Endothelial cell of umbilical vein (primary cell): ENCODE measurements at regions of chr7 and their contacts with region 1.

Region 1: DNA sequence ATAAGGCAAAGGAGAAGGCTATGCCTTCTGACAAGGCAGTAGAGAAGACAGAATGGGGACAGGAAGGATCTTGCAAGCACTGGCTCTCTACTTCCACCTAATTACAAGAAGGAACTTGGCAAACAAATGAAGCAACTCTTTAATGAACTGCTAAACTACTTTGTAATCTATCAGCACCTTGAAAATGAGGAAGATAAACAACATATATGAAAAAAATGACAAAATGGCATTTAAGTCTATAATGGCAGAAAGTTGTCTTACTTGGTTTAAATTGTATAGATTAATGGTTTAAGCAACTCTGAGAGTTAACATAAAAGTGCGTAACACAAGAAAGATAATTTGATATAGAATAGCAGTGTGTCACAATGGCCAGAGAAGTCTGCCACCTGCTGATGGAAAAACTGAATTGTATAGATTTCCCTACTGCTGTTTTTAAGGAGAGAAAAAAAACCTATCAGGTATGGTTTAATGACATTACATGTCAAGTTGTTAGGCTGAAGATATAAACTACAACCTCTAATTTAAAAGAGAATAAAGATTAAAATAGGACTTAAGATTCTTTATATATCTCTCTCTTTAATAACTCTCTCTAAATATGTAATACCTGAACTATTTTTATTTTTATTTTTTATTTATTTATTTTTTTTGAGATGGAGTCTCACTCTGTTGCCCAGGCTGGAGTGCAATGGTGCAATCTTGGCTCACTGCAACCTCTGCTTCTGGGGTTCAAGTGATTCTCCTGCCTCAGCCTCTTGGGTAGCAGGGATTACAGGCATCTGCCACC is 11.8 kb downstream of the NT5C3A start:
- DNase-seq: peak; percentile 84
- H3K4me3 ChIP-seq: no peak overlapping the region
- H3K27ac ChIP-seq: no peak overlapping the region
- H3K4me1 ChIP-seq: peaks cover 11% of the 10 kb centered on the region
- H3K27me3 ChIP-seq: no peaks in the 10 kb centered on the region
- CTCF ChIP-seq: peak; percentile 41 to 52
- POLR2A ChIP-seq: no peak

Region 2: DNA sequence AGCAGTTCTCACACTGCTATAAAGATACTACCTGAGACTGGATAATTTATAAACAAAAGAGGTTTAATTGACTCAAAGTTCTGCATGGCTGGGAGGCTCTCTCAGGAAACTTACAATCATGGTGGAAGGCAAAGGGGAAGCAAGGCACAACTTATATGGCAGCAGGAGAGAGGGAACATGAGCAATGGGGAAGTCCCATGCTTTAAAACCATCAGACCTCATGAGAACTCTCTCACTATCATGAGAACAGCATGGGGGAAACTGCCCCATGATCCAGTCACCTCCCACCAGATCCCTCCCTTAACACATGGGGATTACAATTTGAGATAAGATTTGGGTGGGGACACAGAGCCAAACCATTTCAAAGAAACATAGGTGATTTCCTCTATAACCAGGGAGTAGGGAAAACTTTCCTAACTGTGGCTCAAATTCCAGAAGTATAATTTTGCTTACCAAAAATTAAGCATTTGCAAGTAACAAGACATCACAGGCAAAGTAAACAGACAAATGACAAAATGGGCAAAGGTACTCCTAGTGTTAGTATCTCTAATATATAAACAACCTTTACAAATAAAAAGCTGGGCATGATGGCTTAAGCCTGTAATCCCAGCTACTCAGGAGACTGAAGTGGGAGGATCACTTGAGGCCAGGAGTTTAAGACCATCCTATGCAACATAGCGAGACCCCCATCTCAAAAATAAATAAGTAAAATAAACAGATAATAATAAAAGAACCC is 247.2 kb before region 1 on chr7:
- CTCF ChIA-PET with region 1: interaction called, 11 read pairs
- POLR2A ChIA-PET with region 1: no interaction called
- dilution Hi-C with region 1: no loop called
- intact Hi-C with region 1: loop called (anchors 1 kb)
- DNase-seq: no peak
- H3K4me3 ChIP-seq: no peak overlapping the region
- H3K27ac ChIP-seq: no peak overlapping the region
- H3K4me1 ChIP-seq: no peaks in the 10 kb centered on the region
- H3K27me3 ChIP-seq: no peaks in the 10 kb centered on the region
- CTCF ChIP-seq: no peak
- POLR2A ChIP-seq: no peak

Region 3: DNA sequence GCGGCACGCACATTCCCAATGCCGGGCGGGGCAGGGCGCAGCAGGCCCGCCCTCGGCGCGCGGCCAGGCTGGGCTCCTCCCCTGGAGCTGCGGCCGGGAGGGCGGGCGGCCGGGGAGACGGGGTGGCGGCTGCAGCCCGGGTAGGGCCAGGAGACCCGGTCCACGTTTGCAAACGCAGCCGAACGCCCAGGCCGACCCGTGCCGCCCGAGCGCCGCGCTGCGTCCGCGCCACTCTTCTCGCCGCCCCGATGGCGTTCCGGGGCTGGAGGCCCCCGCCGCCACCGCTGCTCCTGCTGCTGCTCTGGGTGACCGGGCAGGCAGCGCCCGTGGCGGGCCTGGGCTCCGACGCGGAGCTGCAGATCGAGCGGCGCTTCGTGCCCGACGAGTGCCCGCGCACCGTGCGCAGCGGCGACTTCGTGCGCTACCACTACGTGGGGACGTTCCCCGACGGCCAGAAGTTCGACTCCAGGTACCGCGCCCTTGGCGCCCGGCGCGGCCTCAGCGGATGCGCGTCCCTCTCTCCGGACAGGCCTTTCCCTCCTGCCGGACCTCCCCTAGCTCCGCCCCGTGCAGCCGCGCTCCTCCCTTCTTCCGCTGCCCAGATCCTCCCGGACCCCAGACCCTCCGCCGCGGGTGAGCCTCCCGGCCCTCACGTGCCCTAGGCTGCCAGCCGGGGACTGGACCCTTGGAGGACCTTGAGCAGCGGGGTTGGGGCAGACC is 93.2 kb before region 1 on chr7 and contains the start of gene FKBP9:
- CTCF ChIA-PET with region 1: interaction called, 6 read pairs
- POLR2A ChIA-PET with region 1: no interaction called
- dilution Hi-C with region 1: no loop called
- intact Hi-C with region 1: loop called (anchors 2 kb)
- DNase-seq: peak; percentile 82
- H3K4me3 ChIP-seq: peak within 1 kb of the TSS; percentile 50 to 89 (median 73)
- H3K27ac ChIP-seq: peak within 1 kb of the TSS; percentile 78
- H3K4me1 ChIP-seq: peaks cover 10% of the 10 kb centered on the region
- H3K27me3 ChIP-seq: no peaks in the 10 kb centered on the region
- CTCF ChIP-seq: no peak
- POLR2A ChIP-seq: peak; percentile 92
- total RNA-seq, gene FKBP9: 112 and 124 TPM in 2 replicates

Region 4: DNA sequence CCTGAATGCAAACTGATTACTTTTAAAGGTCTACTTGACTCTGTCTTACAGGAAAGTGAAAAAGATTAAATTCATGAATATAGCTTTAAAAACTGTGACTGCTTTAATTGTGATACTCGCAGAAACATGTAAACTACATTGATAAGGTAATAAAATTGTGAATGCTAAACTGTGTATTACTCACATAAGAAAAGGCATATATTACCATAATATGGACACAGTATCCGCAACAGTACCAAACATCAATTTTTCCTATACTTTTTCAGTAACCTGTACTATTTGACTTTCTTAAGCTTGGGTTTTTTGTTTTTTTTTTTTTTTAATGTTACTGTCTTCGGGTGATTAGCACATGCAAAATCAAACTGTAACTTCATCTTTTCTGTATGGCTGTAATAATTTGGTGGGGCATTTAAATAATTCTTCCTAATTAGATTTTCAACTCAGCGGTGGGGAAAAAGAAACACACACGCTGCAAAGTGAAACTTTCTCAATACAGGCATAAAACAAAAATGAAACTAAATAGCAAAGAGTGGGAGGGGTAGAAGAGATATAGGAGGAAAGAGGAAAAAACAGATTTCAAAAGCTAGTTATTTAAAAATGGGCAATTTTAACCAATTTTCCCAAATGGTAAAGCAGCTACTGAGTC is 11.3 kb before region 1 on chr7:
- CTCF ChIA-PET with region 1: interaction called, 12 read pairs
- POLR2A ChIA-PET with region 1: no interaction called
- dilution Hi-C with region 1: no loop called
- intact Hi-C with region 1: no loop called
- DNase-seq: peak; percentile 58
- H3K4me3 ChIP-seq: peak overlapping the region; percentile 28 to 93 (median 84)
- H3K27ac ChIP-seq: peak overlapping the region; percentile 38
- H3K4me1 ChIP-seq: peaks cover 13% of the 10 kb centered on the region
- H3K27me3 ChIP-seq: no peaks in the 10 kb centered on the region
- CTCF ChIP-seq: no peak
- POLR2A ChIP-seq: no peak

Region 5: GRCh38 chr7:33062782-33063443 is 12.2 kb after region 1 on chr7:
- CTCF ChIA-PET with region 1: no interaction called
- POLR2A ChIA-PET with region 1: no interaction called
- dilution Hi-C with region 1: no loop called
- intact Hi-C with region 1: loop called (anchors 1 kb)
- DNase-seq: peak; percentile 96
- H3K4me3 ChIP-seq: peak overlapping the region; percentile 56 to 87 (median 81)
- H3K27ac ChIP-seq: peak overlapping the region; percentile 81
- H3K4me1 ChIP-seq: peaks cover 15% of the 10 kb centered on the region
- H3K27me3 ChIP-seq: no peaks in the 10 kb centered on the region
- CTCF ChIP-seq: no peak
- POLR2A ChIP-seq: peak; percentile 52

Region 6: DNA sequence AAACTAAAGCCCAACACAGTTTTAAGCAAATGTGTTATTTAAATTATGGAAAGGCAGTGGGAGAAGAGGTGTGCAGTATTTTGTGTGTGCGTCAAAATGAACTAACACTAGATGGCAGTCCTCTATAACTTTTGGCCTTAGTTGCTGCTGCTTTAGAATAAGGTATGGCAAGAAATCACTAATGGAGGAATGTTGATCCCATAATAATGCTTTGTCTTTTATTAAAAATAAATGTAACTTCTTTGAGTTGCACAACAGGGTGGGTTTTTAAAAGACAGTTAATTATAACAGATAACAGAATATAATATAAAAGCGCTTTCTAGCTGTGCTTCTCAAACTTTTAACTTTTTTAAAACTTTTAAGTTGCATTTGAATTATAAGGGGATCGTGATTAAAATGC is 135.1 kb after region 1 on chr7:
- CTCF ChIA-PET with region 1: no interaction called
- POLR2A ChIA-PET with region 1: no interaction called
- dilution Hi-C with region 1: no loop called
- intact Hi-C with region 1: no loop called
- DNase-seq: peak; percentile 63
- H3K4me3 ChIP-seq: no peak overlapping the region
- H3K27ac ChIP-seq: no peak overlapping the region
- H3K4me1 ChIP-seq: no peaks in the 10 kb centered on the region
- H3K27me3 ChIP-seq: no peaks in the 10 kb centered on the region
- CTCF ChIP-seq: peak; percentile 34 to 52
- POLR2A ChIP-seq: no peak